Common myeloid progenitor, CD34-positive (primary cell): ENCODE measurements at regions of chr11 and their contacts with region 1.

Region 1: DNA sequence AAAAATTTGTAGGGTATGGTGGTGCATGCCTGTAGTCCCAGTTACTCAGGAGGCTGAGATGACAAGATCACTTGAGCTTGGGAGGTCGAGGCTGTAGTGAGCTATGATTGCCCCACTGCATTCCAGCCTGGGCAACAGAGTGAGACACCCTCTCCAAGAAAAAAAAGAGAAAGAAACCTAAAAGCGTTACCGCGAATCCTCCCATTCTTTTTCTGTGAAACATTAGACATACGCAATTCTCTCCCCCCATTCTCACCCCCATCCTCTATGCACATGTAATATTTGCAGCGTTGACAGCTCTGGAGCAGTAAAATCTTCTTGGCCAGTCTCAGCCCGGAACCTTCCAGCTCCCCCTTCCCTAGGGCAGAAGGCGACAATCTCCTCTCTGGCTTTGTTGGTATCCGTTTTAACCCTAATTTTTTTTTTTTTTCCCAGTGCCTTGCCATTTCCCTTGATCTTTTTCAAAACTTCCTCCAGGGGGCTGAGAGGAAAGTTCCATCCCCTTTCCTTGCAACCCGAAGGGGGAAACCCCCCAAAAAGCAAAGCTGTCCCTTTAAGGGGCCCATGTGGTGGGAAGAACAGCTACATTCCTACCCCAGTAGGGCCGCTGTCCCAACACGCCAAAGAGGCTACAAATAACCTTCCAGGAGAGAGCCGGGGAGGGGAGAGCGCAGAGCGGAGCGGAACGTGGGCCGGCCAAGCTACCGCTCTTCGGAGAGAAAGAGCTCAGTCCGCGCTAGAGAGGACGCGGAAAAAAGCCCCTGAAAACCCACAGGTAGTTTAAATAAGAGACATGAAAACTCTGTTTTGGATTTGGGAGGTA is 1.9 kb downstream of the LRP4 start:
- DNase-seq: peak in 2 of 3 donors; percentile 45 to 59
- H3K4me3 ChIP-seq: peak overlapping the region; percentile 37 to 87 (median 65)
- H3K27ac ChIP-seq: no peak overlapping the region
- H3K4me1 ChIP-seq: peaks cover 14 to 41% (median 34%) of the 10 kb centered on the region in 4 experiments
- H3K27me3 ChIP-seq: peaks cover 8 to 54% (median 29%) of the 10 kb centered on the region in 5 experiments

Region 2: DNA sequence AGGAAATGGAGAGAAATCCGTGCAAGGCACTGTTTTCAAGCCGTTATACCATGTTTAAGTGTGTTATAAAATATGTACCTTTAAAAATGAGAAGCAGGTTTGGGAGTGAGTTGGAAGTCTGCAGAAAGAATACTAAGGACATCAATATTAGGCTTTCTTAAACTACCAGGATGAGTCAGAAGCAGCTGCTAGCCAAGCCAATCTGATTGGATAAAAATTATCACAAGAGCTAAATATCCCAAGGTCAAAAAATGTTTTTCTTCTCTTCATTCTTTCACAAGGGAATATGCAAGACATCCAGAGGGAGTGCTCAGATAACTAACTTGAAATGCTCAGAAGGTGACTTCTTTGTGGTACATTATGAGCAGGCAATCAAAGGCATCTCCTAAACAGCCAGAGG is 51.2 kb before region 1 on chr11:
- CTCF ChIA-PET with region 1: no interaction called
- POLR2A ChIA-PET with region 1: no interaction called
- DNase-seq: no peak
- H3K4me3 ChIP-seq: no peak overlapping the region
- H3K27ac ChIP-seq: no peak overlapping the region
- H3K4me1 ChIP-seq: no peaks in the 10 kb centered on the region
- H3K27me3 ChIP-seq: no peaks in the 10 kb centered on the region

Region 3: GRCh38 chr11:46936138-46937110 is 19.9 kb after region 1 on chr11 and contains the start of gene CSTPP1:
- CTCF ChIA-PET with region 1: interaction called, 12 read pairs
- POLR2A ChIA-PET with region 1: no interaction called
- DNase-seq: peak; percentile 93 to 95 (median 94)
- H3K4me3 ChIP-seq: peak within 1 kb of the TSS; percentile 69 to 97 (median 77)
- H3K27ac ChIP-seq: peak within 1 kb of the TSS; percentile 58 to 82
- H3K4me1 ChIP-seq: peaks cover 0 to 13% (median 8%) of the 10 kb centered on the region in 4 experiments
- H3K27me3 ChIP-seq: no peaks in the 10 kb centered on the region

Region 4: GRCh38 chr11:47917643-47918369 is 1001.3 kb after region 1 on chr11:
- CTCF ChIA-PET with region 1: no interaction called
- POLR2A ChIA-PET with region 1: no interaction called
- DNase-seq: peak; percentile 92 to 97 (median 96)
- H3K4me3 ChIP-seq: peak overlapping the region in 3 of 7 experiments; percentile 14 to 48 (median 22)
- H3K27ac ChIP-seq: peak overlapping the region; percentile 62 to 85
- H3K4me1 ChIP-seq: peaks cover 3 to 59% (median 47%) of the 10 kb centered on the region in 4 experiments
- H3K27me3 ChIP-seq: no peaks in the 10 kb centered on the region